ENCODE measurements at regions of chr12 and their contacts with region 1.

Region 1: GRCh38 chr12:125140279-125141209 is 75.3 kb downstream of the AACS start:
- DNase-seq: peak; percentile 90
- ATAC-seq: peak; percentile 88
- H3K4me3 ChIP-seq: no peak overlapping the region
- H3K27ac ChIP-seq: peak overlapping the region; percentile 58
- H3K4me1 ChIP-seq: peaks cover 34% of the 10 kb centered on the region
- H3K27me3 ChIP-seq: no peaks in the 10 kb centered on the region
- CTCF ChIP-seq: no peak

Region 2: GRCh38 chr12:125072496-125072895 is 68.0 kb before region 1 on chr12:
- CTCF ChIA-PET with region 1: interaction called, 11 read pairs
- POLR2A ChIA-PET with region 1: no interaction called
- intact Hi-C with region 1: no loop called
- DNase-seq: no peak
- ATAC-seq: no peak
- H3K4me3 ChIP-seq: no peak overlapping the region
- H3K27ac ChIP-seq: no peak overlapping the region
- H3K4me1 ChIP-seq: no peaks in the 10 kb centered on the region
- H3K27me3 ChIP-seq: no peaks in the 10 kb centered on the region
- CTCF ChIP-seq: no peak

Region 3: DNA sequence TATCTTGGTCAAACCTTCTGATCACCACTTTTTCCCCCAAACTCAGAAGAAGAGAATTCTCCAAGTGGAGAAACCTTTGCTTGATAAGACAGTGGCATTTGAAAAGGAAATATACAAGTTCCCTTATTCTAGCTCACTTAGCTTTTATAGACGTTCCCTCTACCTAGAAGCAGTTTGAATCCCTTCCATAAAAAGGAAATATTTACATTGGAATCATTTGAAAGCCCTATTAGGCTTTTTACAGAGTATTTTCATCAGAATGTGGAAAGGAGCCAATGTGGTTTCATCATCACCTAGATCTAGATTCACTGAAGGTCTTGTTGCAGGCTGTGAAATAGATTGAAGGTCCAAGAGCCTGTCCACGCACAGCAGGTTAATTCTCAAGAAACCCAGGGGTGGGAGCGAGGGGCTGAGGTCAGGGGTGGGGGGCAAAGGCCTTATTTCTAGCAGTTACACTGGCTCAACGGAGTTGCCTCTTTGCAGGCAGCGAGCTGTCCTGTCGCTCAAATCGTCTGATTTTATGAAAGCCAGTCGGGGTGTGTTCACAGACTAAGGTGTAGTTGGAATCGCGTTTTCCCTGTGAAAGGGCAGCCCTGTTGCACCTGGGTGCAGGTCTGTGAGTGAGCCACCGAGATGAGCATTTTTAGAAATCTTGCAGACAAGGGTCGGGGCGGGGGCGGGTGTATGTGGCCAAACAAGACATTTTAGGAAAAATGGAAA is 29.7 kb before region 1 on chr12:
- CTCF ChIA-PET with region 1: no interaction called
- POLR2A ChIA-PET with region 1: no interaction called
- intact Hi-C with region 1: loop called (anchors 2 kb)
- DNase-seq: peak; percentile 33
- ATAC-seq: peak; percentile 75
- H3K4me3 ChIP-seq: no peak overlapping the region
- H3K27ac ChIP-seq: no peak overlapping the region
- H3K4me1 ChIP-seq: no peaks in the 10 kb centered on the region
- H3K27me3 ChIP-seq: no peaks in the 10 kb centered on the region
- CTCF ChIP-seq: no peak

Region 4: DNA sequence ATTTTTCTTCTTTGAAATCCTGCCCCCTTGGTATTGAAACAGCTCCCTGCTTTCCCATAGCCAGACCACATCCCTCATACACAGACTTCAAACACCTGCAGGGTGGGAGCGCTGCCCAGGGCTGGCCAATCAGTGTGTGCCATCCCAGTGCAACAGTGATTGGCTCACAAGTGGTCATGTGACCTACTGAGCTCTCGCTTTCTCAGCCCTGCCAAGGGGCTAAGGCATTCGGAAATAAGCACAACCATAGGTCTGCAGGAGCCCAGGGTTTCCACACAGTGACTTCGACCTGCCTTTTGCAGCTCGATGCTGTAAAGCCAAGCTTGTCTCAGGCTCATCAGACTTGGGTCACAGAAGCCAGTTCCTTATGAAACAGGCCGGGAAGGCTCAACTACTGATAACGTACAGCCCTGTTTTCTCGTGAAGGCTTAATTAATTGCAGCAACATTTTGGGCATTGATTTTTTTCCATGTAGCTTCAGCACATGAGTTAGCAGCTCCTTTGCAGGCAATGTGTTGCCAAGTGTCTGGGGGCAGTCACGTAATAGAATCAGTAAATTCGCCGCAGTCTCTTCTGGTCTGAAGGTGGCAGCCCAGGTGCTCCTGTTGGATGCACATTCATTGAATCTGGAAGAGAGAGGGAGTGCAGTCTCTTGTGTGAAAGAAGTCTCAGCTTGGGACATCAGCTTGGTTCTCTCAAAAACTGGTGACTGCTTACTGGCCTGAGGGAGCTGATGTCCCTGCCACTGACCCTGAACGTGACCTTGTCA is 1016.4 kb after region 1 on chr12:
- CTCF ChIA-PET with region 1: no interaction called
- POLR2A ChIA-PET with region 1: no interaction called
- intact Hi-C with region 1: no loop called
- DNase-seq: no peak
- ATAC-seq: no peak
- H3K4me3 ChIP-seq: no peak overlapping the region
- H3K27ac ChIP-seq: no peak overlapping the region
- H3K4me1 ChIP-seq: no peaks in the 10 kb centered on the region
- H3K27me3 ChIP-seq: peaks cover 11% of the 10 kb centered on the region; the same call in 1 of the 2 replicates
- CTCF ChIP-seq: no peak